PC-3 (cell line): ENCODE measurements at regions of chr3 and their contacts with region 1.

Region 1: DNA sequence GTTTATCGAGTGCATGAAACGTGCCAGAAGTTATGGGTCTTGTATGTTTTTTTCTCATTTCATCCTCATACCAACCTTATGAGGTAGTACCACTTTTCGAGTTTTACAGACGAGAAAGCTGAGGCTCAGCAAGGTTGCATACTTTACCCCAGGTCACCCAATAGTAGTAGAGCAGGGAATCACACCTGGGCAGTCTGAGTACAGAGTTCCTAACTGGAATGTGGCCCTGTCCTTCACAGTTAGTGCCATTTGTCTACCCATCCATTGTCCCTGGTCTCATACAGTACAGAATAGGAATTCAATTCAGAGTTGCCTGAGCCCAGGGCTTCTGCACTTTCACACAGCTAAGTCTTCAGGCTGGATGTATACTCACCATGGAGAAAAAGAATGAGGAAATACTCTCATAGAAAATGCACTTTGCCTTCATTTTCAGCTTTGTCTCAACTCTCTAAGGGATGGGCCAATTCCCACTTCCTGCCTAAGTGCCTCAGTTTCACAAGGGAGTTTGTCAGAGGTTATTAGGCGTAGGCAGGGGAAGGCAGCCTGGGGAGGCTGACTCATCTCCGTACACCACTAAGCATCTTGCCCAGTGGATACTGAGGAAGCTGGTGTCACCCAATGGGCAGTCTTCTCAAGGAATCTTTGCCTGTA is 93.2 kb downstream of the TMEM212 start:
- DNase-seq: peak; percentile 60
- ATAC-seq: peak; percentile 50
- H3K4me3 ChIP-seq: no peak overlapping the region
- H3K27ac ChIP-seq: peak overlapping the region; percentile 53
- H3K4me1 ChIP-seq: peaks cover 16% of the 10 kb centered on the region
- H3K27me3 ChIP-seq: no peaks in the 10 kb centered on the region
- CTCF ChIP-seq: no peak

Region 2: GRCh38 chr3:170848292-170848917 is 1087.9 kb before region 1 on chr3:
- CTCF ChIA-PET with region 1: no interaction called
- POLR2A ChIA-PET with region 1: no interaction called
- intact Hi-C with region 1: no loop called
- DNase-seq: peak; percentile 75
- ATAC-seq: peak; percentile 63
- H3K4me3 ChIP-seq: no peak overlapping the region
- H3K27ac ChIP-seq: no peak overlapping the region
- H3K4me1 ChIP-seq: no peaks in the 10 kb centered on the region
- H3K27me3 ChIP-seq: no peaks in the 10 kb centered on the region
- CTCF ChIP-seq: peak; percentile 83

Region 3: DNA sequence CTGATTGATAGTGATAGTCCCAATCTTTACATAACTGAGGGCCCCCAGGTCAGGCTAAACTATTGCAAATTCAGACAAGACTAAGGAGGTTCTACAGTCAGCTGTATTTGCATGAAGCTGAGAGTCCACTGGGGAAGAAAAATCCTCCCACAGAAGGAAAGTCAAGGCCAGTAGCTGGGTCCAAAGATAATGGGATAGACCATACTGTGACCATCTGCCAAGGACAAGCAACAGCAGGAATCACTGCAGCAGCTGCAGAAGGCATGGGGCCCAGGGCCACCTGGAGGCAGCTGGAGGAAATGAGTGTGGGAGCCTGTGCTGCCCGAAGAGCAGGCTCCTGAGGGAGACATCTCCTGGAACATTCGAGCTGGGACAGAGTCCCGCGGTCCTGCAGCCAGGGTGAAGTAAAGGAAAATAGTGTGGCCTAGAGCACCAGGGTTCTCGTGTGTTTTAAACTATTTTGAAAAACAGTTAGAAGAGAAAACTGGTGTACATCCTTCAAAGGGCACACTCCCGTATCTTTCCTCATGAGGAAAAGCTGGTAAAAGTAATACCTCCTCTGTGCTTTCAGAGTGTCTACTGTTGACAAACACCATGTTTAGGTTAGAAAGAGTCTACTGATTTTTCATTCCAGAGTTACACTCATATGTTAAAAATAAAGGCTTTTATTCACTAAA is 106.3 kb before region 1 on chr3:
- CTCF ChIA-PET with region 1: no interaction called
- POLR2A ChIA-PET with region 1: no interaction called
- intact Hi-C with region 1: no loop called
- DNase-seq: peak; percentile 79
- ATAC-seq: peak; percentile 65
- H3K4me3 ChIP-seq: no peak overlapping the region
- H3K27ac ChIP-seq: peak overlapping the region; percentile 33
- H3K4me1 ChIP-seq: peaks cover 45% of the 10 kb centered on the region
- H3K27me3 ChIP-seq: no peaks in the 10 kb centered on the region
- CTCF ChIP-seq: peak; percentile 89

Region 4: GRCh38 chr3:171901615-171902312 is 34.6 kb before region 1 on chr3:
- CTCF ChIA-PET with region 1: interaction called, 11 read pairs
- POLR2A ChIA-PET with region 1: no interaction called
- intact Hi-C with region 1: no loop called
- DNase-seq: peak; percentile 8
- ATAC-seq: no peak
- H3K4me3 ChIP-seq: no peak overlapping the region
- H3K27ac ChIP-seq: no peak overlapping the region
- H3K4me1 ChIP-seq: no peaks in the 10 kb centered on the region
- H3K27me3 ChIP-seq: no peaks in the 10 kb centered on the region
- CTCF ChIP-seq: no peak